Left lung (tissue), 14 donors: ENCODE measurements at regions of chr9 and their contacts with region 1.

Region 1: DNA sequence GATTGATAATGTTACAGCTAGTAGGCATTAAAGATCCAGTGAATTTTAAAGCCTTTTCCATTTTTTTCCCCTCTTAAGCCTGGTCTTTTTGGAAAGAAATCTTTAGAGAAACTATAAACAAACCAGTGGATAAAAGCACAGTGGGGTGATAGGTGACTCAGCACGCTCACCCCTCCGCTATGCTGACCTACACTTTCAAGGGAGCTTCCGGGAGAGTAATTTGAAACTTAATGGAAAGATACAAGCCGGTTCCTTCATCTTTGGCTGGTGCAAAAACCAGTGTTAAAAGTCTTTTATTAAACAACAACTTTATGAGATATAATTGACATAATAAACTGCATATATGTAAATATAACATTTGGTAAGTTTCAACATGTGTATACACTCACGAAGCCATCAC is 27.0 kb upstream of the ALDOB start:
- DNase-seq: no peak
- ATAC-seq: no peak
- H3K4me3 ChIP-seq: no peak overlapping the region
- H3K27ac ChIP-seq: no peak overlapping the region
- H3K4me1 ChIP-seq: no peaks in the 10 kb centered on the region
- H3K27me3 ChIP-seq: peaks cover 0 to 17% of the 10 kb centered on the region in 2 donors
- CTCF ChIP-seq: no peak

Region 2: DNA sequence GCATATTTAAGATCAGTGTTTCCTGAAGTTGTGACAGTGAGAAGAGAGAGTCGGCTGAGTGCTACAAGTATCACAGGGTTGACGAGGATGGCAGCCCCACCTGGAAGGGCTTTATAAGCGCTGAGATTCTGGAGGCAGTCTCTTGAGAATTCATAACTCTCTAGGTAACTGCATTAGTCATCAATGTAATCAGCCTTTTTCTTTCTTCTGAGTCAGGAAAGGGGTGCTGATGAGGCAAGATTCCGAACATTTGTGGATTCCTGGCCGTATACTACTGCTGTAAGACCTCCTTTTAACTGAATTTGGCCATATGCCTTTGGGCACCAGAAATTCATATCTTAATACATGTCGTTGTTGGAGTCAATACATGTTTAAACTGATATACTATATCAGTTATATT is 64.5 kb after region 1 on chr9:
- intact Hi-C with region 1: loop called in 1 of 2 experiments (anchors 5 kb)
- DNase-seq: no peak
- ATAC-seq: no peak
- H3K4me3 ChIP-seq: no peak overlapping the region
- H3K27ac ChIP-seq: no peak overlapping the region
- H3K4me1 ChIP-seq: no peaks in the 10 kb centered on the region
- H3K27me3 ChIP-seq: peaks cover 0 to 17% of the 10 kb centered on the region in 2 donors
- CTCF ChIP-seq: no peak